ENCODE measurements at regions of chr4 and their contacts with region 1.

Region 1: DNA sequence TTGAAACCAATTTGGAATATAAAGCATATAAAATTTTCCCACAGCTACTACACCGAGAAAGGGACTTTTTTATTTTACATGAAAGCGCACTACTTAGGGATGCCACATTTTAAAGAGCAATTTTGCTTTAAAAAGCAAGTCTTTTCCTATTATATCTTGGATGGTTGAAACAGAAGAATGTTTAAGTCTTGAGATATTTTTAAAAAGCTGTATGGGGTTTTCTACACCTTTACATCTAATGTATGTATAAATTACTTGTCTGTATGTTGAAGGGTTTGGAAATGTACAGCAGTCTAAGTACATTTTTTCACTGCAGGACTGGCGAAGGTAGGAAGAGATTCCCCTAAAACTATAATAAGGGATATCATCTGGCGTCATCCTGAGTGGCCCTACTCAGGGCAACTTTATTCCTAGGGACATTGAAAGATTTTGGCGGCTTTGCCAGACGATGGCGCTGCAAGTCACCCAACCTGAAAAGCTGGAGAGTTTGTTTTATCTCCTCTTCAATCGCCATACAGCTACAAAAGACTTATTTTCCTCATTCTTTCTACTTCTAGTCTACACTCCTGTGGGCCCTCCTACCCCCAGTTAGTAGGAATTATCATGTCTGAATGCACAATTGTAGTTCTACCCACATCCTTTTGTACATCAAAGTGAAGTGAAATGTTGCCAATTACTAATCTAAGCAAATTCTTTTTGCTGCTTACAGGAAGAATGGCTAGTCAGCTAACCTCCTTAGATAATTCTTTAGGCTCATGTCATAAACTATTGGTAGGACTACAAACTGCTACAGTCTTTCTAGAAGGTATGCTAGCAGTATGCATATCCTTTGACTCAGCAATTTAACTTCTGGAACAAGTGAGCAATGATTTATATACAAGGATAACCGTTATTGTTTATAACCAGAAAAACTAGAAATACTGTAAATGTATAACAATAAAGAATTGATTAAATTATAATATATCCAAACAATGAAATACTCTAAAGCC is 782 bp upstream of the NEK1 start:
- DNase-seq: peak; percentile 91
- H3K4me3 Mint-ChIP-seq: peak overlapping the region; percentile 90
- H3K27ac Mint-ChIP-seq: peak overlapping the region; percentile 94
- H3K4me1 Mint-ChIP-seq: peaks cover 36% of the 10 kb centered on the region
- H3K27me3 Mint-ChIP-seq: no peaks in the 10 kb centered on the region

Region 2: GRCh38 chr4:168318266-168318895 is 1294.8 kb before region 1 on chr4 and contains the start of gene DDX60:
- intact Hi-C with region 1: loop called (anchors 5 kb)
- DNase-seq: peak; percentile 96
- H3K4me3 Mint-ChIP-seq: peak within 1 kb of the TSS; percentile 83
- H3K27ac Mint-ChIP-seq: peak within 1 kb of the TSS; percentile 96
- H3K4me1 Mint-ChIP-seq: peaks cover 51% of the 10 kb centered on the region
- H3K27me3 Mint-ChIP-seq: no peaks in the 10 kb centered on the region
- total RNA-seq, gene DDX60: 15.2 and 17.6 TPM in 2 replicates

Region 3: GRCh38 chr4:169010125-169011023 is 602.8 kb before region 1 on chr4 and contains the start of gene CBR4:
- intact Hi-C with region 1: loop called (anchors 5 kb)
- DNase-seq: peak; percentile 98
- H3K4me3 Mint-ChIP-seq: peak within 1 kb of the TSS; percentile 94
- H3K27ac Mint-ChIP-seq: peak within 1 kb of the TSS; percentile 93
- H3K4me1 Mint-ChIP-seq: peaks cover 25% of the 10 kb centered on the region
- H3K27me3 Mint-ChIP-seq: peaks cover 6% of the 10 kb centered on the region
- total RNA-seq, gene CBR4: 20.6 and 22.8 TPM in 2 replicates

Region 4: GRCh38 chr4:169720529-169720928 is 107.4 kb after region 1 on chr4:
- intact Hi-C with region 1: loop called (anchors 2 kb)
- DNase-seq: no peak
- H3K4me3 Mint-ChIP-seq: no peak overlapping the region
- H3K27ac Mint-ChIP-seq: no peak overlapping the region
- H3K4me1 Mint-ChIP-seq: peaks cover 9% of the 10 kb centered on the region
- H3K27me3 Mint-ChIP-seq: no peaks in the 10 kb centered on the region

Region 5: DNA sequence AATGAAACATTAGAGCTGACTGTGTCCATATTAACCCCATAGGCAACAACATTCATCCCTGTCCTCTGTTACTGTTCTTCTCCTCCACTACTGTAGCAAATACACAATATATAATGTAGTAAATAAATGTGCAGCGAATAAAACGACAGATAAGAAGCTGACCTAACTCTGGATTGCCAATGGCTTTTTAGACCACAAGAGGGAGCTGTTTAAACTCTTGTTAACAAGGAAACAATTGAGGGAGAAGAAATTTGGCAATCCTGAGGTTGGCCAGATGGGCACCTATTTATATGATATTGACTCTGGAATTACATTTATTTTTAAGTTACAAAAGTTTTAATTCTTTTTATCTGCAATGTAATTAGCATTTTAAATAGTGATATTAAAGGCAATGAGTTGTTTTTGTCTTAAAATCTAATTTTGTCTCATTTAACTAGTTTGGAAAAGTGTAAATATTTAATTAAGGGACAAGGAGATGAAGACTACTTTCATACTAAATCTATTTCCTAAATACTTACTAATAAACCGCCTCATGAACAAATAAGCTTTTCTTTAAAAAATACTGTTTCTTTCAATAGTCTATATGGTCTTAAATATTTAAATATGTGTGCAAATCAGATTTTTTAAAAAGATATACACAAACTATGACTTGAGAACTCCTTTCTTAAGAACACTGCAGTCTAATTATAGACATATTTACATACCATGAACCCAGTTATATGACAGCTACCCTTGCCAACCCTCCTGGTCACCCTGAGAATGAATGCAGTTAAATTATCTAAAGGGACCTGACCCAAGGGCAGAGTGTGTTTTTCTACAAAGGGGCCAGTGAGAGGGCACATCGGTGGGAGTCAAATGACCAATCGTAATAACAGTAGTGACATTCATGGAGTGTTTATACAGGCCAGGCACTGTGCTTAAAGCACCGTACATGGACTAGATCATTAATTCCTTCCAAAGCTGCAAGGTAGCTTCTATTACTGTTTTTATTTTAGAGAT is 197.5 kb after region 1 on chr4:
- intact Hi-C with region 1: loop called (anchors 2 kb)
- DNase-seq: peak; percentile 77
- H3K4me3 Mint-ChIP-seq: no peak overlapping the region
- H3K27ac Mint-ChIP-seq: no peak overlapping the region
- H3K4me1 Mint-ChIP-seq: no peaks in the 10 kb centered on the region
- H3K27me3 Mint-ChIP-seq: peaks cover 2% of the 10 kb centered on the region

Region 6: GRCh38 chr4:169846396-169846795 is 233.2 kb after region 1 on chr4:
- intact Hi-C with region 1: no loop called
- DNase-seq: no peak
- H3K4me3 Mint-ChIP-seq: no peak overlapping the region
- H3K27ac Mint-ChIP-seq: no peak overlapping the region
- H3K4me1 Mint-ChIP-seq: no peaks in the 10 kb centered on the region
- H3K27me3 Mint-ChIP-seq: peaks cover 2% of the 10 kb centered on the region

Region 7: DNA sequence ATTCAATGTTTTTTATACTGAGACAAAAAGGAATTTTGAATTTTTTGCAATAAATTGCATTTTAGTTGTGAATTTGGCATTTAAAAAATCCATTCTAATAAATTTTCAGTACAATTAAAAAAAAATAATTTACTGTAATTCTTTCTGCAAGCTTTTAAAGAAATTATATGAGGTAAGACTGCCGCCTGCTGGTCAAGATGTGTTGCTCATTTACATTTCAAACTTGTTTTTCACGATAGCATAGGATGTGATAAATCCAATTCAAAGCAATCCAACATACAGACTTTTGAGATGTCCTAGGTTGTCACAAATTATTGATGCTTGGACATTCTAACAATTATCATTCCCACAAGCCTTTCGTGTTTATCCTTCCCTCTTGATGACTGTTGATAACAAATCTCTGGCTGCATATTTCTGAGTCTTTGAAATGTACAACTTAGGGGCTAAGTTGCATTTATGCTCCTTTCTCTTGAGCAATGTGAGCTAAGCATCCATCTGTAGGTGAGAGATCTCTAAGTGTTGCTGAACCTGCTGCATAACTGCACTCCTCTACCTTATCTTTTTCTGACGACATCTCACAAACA is 434.7 kb after region 1 on chr4:
- intact Hi-C with region 1: loop called (anchors 2 kb)
- DNase-seq: peak; percentile 83
- H3K4me3 Mint-ChIP-seq: no peak overlapping the region
- H3K27ac Mint-ChIP-seq: no peak overlapping the region
- H3K4me1 Mint-ChIP-seq: no peaks in the 10 kb centered on the region
- H3K27me3 Mint-ChIP-seq: no peaks in the 10 kb centered on the region

Measured in activated CD4-positive, alpha-beta T cell treated with anti-CD3 and anti-CD28 coated beads, Interleukin-2, amount 10 ng/mL, durations not matched to agents 24 days and 14 days (primary cell).